ENCODE measurements at regions of chr19 and their contacts with region 1.

Region 1: GRCh38 chr19:8204961-8205360 is 4.2 kb upstream of the CERS4 start:
- DNase-seq: no peak
- ATAC-seq: no peak
- H3K4me3 ChIP-seq: no peak overlapping the region
- H3K4me3 Mint-ChIP-seq: no peak overlapping the region
- H3K27ac ChIP-seq: no peak overlapping the region
- H3K27ac Mint-ChIP-seq: no peak overlapping the region
- H3K4me1 ChIP-seq: peaks cover 3 to 14% of the 10 kb centered on the region in 2 experiments
- H3K4me1 Mint-ChIP-seq: peaks cover 4 to 13% (median 5%) of the 10 kb centered on the region in 3 donors
- H3K27me3 ChIP-seq: no peaks in the 10 kb centered on the region
- H3K27me3 Mint-ChIP-seq: no peaks in the 10 kb centered on the region

Region 2: DNA sequence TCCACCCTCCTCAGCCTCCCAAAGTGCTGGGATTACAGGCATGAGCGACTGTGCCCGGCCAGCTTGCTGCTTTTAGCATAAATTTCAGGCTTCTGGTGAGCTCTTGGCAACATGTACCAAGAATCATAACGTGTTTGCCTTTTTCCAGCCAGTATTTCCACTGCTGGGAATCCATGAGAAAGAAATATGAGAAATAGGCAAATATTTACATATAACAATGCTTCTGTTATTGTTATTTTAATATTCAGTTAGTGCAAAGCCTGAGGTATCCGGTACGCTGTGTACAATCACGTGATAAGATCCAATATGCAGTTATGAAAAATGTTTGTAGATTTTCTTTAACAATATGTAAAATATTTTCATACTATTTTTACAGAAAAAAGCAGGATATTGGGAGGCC is 24.9 kb before region 1 on chr19:
- CTCF ChIA-PET with region 1: no interaction called
- POLR2A ChIA-PET with region 1: interaction called in 1 of 2 experiments, 10 read pairs
- DNase-seq: no peak
- ATAC-seq: no peak
- H3K4me3 ChIP-seq: no peak overlapping the region
- H3K4me3 Mint-ChIP-seq: no peak overlapping the region
- H3K27ac ChIP-seq: no peak overlapping the region
- H3K27ac Mint-ChIP-seq: no peak overlapping the region
- H3K4me1 ChIP-seq: peaks cover 3 to 19% of the 10 kb centered on the region in 2 experiments
- H3K4me1 Mint-ChIP-seq: peaks cover 11 to 14% (median 12%) of the 10 kb centered on the region in 3 donors
- H3K27me3 ChIP-seq: no peaks in the 10 kb centered on the region
- H3K27me3 Mint-ChIP-seq: no peaks in the 10 kb centered on the region

Region 3: DNA sequence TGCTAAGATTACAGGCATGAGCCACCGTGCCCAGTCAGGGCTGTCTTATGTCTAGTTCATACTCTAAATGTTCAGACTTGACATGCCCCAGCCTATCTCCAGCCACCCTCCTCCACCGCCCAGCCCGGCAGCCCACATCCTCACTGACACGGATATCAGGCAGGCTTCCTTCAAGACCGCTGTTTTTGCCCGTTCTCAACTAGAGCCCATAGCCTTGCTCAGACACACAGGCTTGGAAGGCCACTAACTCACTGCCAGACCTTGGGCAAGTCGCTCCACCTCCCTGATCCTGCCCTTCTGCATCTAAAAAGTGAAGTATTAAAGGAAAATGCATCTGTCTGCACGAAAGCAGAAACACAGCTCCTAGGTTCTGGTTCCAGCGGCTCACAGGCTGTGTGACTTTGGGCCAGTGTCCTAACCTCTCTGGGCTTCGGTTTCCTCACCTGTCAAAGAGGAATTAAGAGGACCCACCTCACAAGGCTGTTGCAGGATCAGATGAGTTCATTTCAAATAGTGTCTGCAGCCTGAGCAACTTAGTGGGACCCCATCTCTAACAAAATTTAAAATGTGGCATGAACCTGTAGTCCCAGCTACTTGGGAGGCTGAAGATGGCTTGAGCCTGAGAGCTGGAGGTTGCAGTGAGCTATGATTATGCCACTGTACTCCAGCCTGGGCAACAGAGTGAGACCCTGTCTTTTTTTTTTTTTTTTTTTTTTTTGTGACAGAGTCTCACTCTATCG is 10.3 kb before region 1 on chr19:
- CTCF ChIA-PET with region 1: no interaction called
- POLR2A ChIA-PET with region 1: no interaction called
- DNase-seq: peak in 34 of 35 experiments; percentile 19 to 71 (median 51)
- ATAC-seq: peak; percentile 48 to 69 (median 59)
- H3K4me3 ChIP-seq: peak overlapping the region in 1 of 2 donors; percentile 4
- H3K4me3 Mint-ChIP-seq: peak overlapping the region; percentile 58 to 83 (median 71)
- H3K27ac ChIP-seq: peak overlapping the region; percentile 80
- H3K27ac Mint-ChIP-seq: peak overlapping the region; percentile 91 to 98
- H3K4me1 ChIP-seq: peaks cover 25 to 45% of the 10 kb centered on the region in 2 experiments
- H3K4me1 Mint-ChIP-seq: peaks cover 46 to 56% (median 49%) of the 10 kb centered on the region in 3 donors
- H3K27me3 ChIP-seq: no peaks in the 10 kb centered on the region
- H3K27me3 Mint-ChIP-seq: no peaks in the 10 kb centered on the region